K562 (cell line): ENCODE measurements at regions of chrX and their contacts with region 1.

Region 1: DNA sequence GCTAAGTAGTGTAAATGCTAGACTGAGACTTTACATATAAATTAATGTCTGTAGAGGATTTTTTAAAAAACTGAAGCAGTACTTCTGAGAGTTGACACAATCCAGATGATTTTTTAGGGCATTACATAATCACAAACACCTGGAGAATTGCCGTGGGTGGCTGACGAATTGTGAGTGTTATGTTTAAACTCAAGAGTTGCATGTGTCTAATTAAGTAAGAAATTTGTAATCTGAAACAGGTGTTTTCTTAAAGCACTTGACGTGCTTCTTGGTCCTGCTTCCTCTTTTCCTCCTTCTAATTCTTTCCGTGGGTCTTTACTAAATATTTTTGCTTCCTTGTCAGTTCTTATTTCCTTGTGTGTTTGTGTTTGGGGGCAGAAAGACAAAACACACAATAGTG is 27.8 kb downstream of the PIR start:
- DNase-seq: no peak
- ATAC-seq: no peak
- H3K4me3 ChIP-seq: no peak overlapping the region
- H3K27ac ChIP-seq: no peak overlapping the region
- H3K4me1 ChIP-seq: no peaks in the 10 kb centered on the region
- H3K27me3 ChIP-seq: no peaks in the 10 kb centered on the region
- CTCF ChIP-seq: no peak
- EP300 ChIP-seq: no peak
- POLR2A ChIP-seq: no peak
- RAD21 ChIP-seq: no peak

Region 2: DNA sequence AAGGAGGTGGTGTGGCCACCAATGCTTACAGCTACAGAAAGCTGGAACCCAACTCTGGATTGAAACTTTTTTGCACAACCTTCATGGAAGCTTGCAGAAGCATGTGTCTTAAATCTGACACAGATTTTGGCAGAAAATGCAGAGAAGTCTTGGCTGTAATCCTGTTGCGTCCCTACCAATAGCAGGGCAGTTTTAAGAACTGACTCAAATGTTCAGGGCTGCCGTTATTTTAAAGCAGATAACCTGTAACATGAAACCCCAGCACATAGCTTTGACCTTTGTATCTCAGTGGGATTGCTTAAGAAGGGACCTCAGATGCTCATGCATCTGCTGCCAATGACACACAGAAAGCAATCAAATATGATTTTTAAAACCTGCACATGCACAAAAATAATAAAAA is 81.0 kb before region 1 on chrX and contains the start of gene VEGFD:
- CTCF ChIA-PET with region 1: interaction called, 33 read pairs
- POLR2A ChIA-PET with region 1: interaction called, 4 read pairs
- in situ Hi-C with region 1: no loop called
- intact Hi-C with region 1: loop called (anchors 2 kb)
- DNase-seq: no peak
- ATAC-seq: no peak
- H3K4me3 ChIP-seq: no peak within 1 kb of the TSS
- H3K27ac ChIP-seq: no peak within 1 kb of the TSS
- H3K4me1 ChIP-seq: no peaks in the 10 kb centered on the region
- H3K27me3 ChIP-seq: no peaks in the 10 kb centered on the region
- CTCF ChIP-seq: no peak
- EP300 ChIP-seq: no peak
- POLR2A ChIP-seq: no peak
- RAD21 ChIP-seq: no peak
- polyA plus RNA-seq, gene VEGFD: not detected

Region 3: DNA sequence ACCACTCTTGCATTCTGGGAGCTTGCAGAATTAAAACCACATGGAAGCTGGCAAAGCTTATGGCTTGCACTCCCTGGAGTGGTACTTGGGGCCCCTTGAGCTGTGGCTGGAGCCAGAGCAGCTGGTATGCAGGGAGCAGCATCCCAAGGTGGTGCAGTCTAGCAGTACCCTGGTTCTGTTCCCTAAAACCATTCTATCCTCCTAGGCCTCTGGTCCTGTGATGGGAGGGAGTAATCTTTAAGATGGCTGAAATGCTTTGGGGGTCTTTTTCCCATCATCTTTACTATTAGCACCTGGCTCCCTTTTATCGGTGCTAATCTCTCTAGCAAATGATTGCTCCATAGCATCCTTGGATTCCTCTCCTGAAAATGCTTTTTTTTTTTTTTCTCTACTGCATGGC is 758.0 kb after region 1 on chrX:
- CTCF ChIA-PET with region 1: no interaction called
- POLR2A ChIA-PET with region 1: no interaction called
- in situ Hi-C with region 1: no loop called
- intact Hi-C with region 1: no loop called
- DNase-seq: no peak
- ATAC-seq: no peak
- H3K4me3 ChIP-seq: no peak overlapping the region
- H3K27ac ChIP-seq: no peak overlapping the region
- H3K4me1 ChIP-seq: no peaks in the 10 kb centered on the region
- H3K27me3 ChIP-seq: no peaks in the 10 kb centered on the region
- CTCF ChIP-seq: no peak
- EP300 ChIP-seq: no peak
- POLR2A ChIP-seq: no peak
- RAD21 ChIP-seq: no peak